CD8-positive, alpha-beta memory T cell (primary cell): ENCODE measurements at regions of chr14 and their contacts with region 1.

Region 1: GRCh38 chr14:89936658-89937185 is 17.8 kb downstream of the EFCAB11 start:
- DNase-seq: no peak
- H3K4me3 ChIP-seq: no peak overlapping the region
- H3K4me3 Mint-ChIP-seq: no peak overlapping the region
- H3K27ac ChIP-seq: no peak overlapping the region
- H3K27ac Mint-ChIP-seq: peak overlapping the region in 2 of 8 donors; percentile 4 to 51
- H3K4me1 ChIP-seq: no peaks in the 10 kb centered on the region
- H3K4me1 Mint-ChIP-seq: peaks cover 0 to 1% (median 0%) of the 10 kb centered on the region in 3 donors
- H3K27me3 ChIP-seq: no peaks in the 10 kb centered on the region
- H3K27me3 Mint-ChIP-seq: peaks cover 0 to 3% of the 10 kb centered on the region in 2 donors

Region 2: DNA sequence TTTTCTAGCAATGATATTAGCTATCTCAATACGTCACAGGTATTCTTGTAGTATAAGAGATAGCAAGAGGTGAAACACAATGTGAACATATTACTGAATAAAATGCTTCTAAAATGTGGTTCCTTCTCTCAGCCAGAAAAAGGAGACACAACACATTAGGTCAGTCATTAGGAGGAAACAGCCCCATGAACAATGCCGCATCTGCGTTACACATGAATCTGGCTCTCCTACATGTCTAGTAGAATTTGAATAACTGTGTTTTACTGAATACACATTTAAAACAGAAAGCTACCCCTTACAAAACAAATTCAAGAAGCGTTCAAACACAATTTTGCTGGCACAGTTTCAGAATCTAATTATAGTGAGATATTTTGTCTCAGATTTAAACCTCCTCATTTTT is 33.8 kb before region 1 on chr14:
- CTCF ChIA-PET with region 1: no interaction called
- POLR2A ChIA-PET with region 1: no interaction called
- DNase-seq: no peak
- H3K4me3 ChIP-seq: no peak overlapping the region
- H3K4me3 Mint-ChIP-seq: peak overlapping the region in 6 of 7 donors; percentile 42 to 65 (median 57)
- H3K27ac ChIP-seq: no peak overlapping the region
- H3K27ac Mint-ChIP-seq: peak overlapping the region in 1 of 8 donors; percentile 12
- H3K4me1 ChIP-seq: no peaks in the 10 kb centered on the region
- H3K4me1 Mint-ChIP-seq: peaks cover 13 to 28% (median 19%) of the 10 kb centered on the region in 3 donors
- H3K27me3 ChIP-seq: no peaks in the 10 kb centered on the region
- H3K27me3 Mint-ChIP-seq: peaks cover 3 to 8% of the 10 kb centered on the region in 2 donors

Region 3: GRCh38 chr14:89955745-89956660 is 19.3 kb after region 1 on chr14 and contains the start of gene TDP1:
- CTCF ChIA-PET with region 1: interaction called, 14 read pairs
- POLR2A ChIA-PET with region 1: no interaction called
- DNase-seq: peak; percentile 92 to 98 (median 98)
- H3K4me3 ChIP-seq: peak within 1 kb of the TSS; percentile 92
- H3K4me3 Mint-ChIP-seq: peak within 1 kb of the TSS; percentile 87 to 97 (median 94)
- H3K27ac ChIP-seq: peak within 1 kb of the TSS; percentile 98
- H3K27ac Mint-ChIP-seq: peak within 1 kb of the TSS; percentile 97 to 99 (median 99)
- H3K4me1 ChIP-seq: peaks cover 53% of the 10 kb centered on the region
- H3K4me1 Mint-ChIP-seq: peaks cover 57 to 69% (median 60%) of the 10 kb centered on the region in 3 donors
- H3K27me3 ChIP-seq: no peaks in the 10 kb centered on the region
- H3K27me3 Mint-ChIP-seq: no peaks in the 10 kb centered on the region
- total RNA-seq, gene TDP1: 82.2 to 84.2 TPM

Region 4: DNA sequence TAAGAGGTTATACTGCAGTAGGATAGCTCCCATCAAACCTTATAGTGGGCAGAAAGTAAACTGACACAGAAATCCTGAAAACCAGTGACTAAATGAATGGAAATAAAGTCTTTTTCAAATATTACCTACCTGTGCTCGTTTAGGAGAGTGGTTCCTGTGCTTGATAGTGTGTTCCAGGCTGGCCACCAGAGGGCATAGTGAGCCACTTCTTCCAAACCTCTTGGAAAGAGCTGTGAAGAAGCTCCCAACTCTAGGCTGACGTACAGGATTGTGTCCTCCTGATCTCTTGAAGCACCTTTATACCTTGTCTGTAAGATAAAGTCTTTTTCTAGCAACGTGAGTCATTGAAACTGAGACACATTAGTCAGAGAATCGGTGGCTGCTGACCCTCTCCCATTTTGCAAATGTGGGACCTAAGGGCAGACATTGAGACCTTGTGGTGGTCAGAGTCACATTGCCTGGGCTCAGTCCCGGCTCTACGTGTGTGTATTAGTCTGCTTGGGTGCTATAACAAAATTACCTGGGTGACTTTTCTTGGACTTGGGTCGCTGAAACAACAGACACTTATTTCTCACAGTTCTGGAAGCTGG is 36.6 kb after region 1 on chr14:
- CTCF ChIA-PET with region 1: interaction called, 18 read pairs
- POLR2A ChIA-PET with region 1: no interaction called
- DNase-seq: peak in 4 of 5 donors; percentile 10 to 56 (median 29)
- H3K4me3 ChIP-seq: no peak overlapping the region
- H3K4me3 Mint-ChIP-seq: no peak overlapping the region
- H3K27ac ChIP-seq: no peak overlapping the region
- H3K27ac Mint-ChIP-seq: peak overlapping the region in 2 of 8 donors; percentile 9 to 51
- H3K4me1 ChIP-seq: no peaks in the 10 kb centered on the region
- H3K4me1 Mint-ChIP-seq: peaks cover 0 to 5% (median 4%) of the 10 kb centered on the region in 3 donors
- H3K27me3 ChIP-seq: no peaks in the 10 kb centered on the region
- H3K27me3 Mint-ChIP-seq: peaks cover 0 to 2% of the 10 kb centered on the region in 2 donors

Region 5: GRCh38 chr14:90045616-90046015 is 108.9 kb after region 1 on chr14:
- CTCF ChIA-PET with region 1: no interaction called
- POLR2A ChIA-PET with region 1: no interaction called
- DNase-seq: no peak
- H3K4me3 ChIP-seq: no peak overlapping the region
- H3K4me3 Mint-ChIP-seq: no peak overlapping the region
- H3K27ac ChIP-seq: no peak overlapping the region
- H3K27ac Mint-ChIP-seq: no peak overlapping the region
- H3K4me1 ChIP-seq: no peaks in the 10 kb centered on the region
- H3K4me1 Mint-ChIP-seq: no peaks in the 10 kb centered on the region
- H3K27me3 ChIP-seq: no peaks in the 10 kb centered on the region
- H3K27me3 Mint-ChIP-seq: no peaks in the 10 kb centered on the region

Region 6: DNA sequence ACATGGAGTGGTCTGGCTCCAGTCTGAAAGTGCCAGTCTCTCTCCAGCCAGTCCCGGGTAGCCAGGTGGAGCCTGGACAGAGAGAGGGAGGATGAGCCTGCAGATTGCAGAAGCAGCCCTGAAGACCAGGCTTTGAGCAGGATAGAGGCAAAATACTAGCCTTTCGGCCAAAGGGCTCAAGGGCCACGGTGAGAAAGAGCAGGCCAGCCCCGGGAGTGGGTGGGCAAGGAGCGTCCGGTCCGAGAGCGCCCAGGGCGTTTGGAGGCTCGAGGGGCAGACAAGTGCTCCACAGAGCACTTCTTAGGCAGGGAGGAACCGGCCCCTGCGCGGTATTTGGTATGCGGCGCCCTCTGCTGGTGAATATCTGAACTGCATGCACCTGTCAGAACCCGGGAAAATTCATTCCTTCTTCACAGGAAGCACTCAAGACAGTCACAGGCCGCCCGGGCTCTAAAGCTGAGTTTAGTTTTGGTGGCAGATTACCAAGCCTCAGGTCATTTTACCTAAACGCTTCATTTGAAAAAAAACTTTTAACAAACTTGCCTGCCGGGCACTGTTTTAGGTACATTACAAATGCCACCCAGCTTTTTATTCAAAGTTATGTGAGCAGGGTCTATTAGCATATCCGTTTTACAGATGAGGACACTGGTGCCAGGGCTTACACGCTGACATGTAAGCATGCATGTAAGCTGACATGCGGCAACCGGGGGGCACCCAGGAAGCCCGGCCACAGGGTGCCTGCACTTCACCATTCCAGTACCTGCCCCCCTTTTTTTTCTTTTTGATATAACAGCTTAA is 298.7 kb after region 1 on chr14:
- CTCF ChIA-PET with region 1: interaction called, 27 read pairs
- POLR2A ChIA-PET with region 1: no interaction called
- DNase-seq: peak; percentile 36 to 63 (median 41)
- H3K4me3 ChIP-seq: no peak overlapping the region
- H3K4me3 Mint-ChIP-seq: no peak overlapping the region
- H3K27ac ChIP-seq: no peak overlapping the region
- H3K27ac Mint-ChIP-seq: no peak overlapping the region
- H3K4me1 ChIP-seq: no peaks in the 10 kb centered on the region
- H3K4me1 Mint-ChIP-seq: peaks cover 0 to 5% (median 2%) of the 10 kb centered on the region in 3 donors
- H3K27me3 ChIP-seq: no peaks in the 10 kb centered on the region
- H3K27me3 Mint-ChIP-seq: peaks cover 20 to 41% of the 10 kb centered on the region in 2 donors